ENCODE measurements at regions of chr3 and their contacts with region 1.

Region 1: DNA sequence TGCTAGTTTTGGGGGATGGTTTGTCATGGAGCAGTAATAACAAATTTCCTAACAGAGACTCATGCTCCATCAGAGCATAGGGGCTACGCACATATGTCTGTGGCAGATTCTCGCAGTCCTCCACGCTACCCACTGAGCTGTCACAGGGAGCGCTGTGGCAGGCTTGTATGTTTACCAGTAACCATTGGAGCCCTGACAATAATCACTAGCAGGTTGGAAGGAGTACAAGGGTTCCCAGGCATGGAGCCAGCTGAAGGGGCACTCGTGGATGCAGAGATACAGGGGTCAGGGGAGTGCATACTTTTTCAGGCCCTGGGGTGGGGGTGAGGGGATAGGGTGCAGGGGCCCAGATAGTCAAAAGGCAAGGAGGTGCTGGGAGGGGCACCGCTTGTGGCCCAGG is 7.9 kb upstream of the GP9 start:
- DNase-seq: peak in 2 of 3 donors; percentile 7 to 35
- H3K4me3 ChIP-seq: no peak overlapping the region
- H3K27ac ChIP-seq: no peak overlapping the region
- H3K4me1 ChIP-seq: peaks cover 0 to 16% (median 4%) of the 10 kb centered on the region in 4 experiments
- H3K27me3 ChIP-seq: no peaks in the 10 kb centered on the region

Region 2: DNA sequence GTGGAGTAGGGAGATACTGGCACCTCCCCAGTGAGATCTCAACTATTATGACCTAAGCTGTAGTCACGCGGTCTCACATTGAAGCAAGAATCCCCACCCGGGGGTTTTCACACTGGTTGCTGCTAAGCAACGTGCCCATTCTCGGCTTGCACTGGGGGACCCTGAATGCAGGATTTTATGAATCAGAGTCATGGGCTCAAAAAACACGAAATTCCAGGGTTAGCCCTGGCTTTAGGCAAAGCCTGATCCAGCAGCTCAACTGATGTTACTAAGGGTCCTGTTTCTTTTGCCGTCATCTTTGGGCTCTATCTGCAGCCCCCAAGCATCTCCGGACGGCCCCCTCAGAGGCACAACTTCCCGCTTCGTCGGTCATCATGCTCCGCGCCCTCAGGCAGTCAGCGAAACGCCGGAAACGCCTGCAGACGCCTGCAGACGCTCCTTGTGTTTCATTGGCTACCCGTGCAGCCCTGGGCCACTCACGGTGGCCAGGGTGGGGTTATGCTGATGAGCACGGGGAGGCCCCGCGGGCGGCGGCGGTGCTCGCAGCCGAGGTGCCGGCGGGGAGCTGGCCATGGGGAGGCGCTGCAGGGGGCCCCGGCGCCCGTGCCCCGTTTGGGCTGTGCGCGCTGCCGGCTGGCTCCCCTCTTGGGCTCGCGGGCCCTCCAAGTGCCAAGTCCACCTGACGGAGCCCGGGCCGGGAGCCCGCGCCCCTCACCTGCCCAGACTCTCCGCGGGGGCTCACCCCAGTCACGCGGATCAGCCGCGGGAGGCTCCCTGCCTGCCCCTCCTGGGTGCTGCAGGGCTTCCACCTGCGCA is 25.7 kb before region 1 on chr3:
- CTCF ChIA-PET with region 1: interaction called, 20 read pairs
- POLR2A ChIA-PET with region 1: interaction called, 5 read pairs
- DNase-seq: peak; percentile 93 to 98 (median 97)
- H3K4me3 ChIP-seq: peak overlapping the region; percentile 35 to 76 (median 55)
- H3K27ac ChIP-seq: peak overlapping the region in 1 of 2 experiments; percentile 49
- H3K4me1 ChIP-seq: peaks cover 0 to 30% (median 22%) of the 10 kb centered on the region in 4 experiments
- H3K27me3 ChIP-seq: no peaks in the 10 kb centered on the region

Region 3: GRCh38 chr3:129039271-129040038 is 13.2 kb before region 1 on chr3:
- CTCF ChIA-PET with region 1: interaction called, 56 read pairs
- POLR2A ChIA-PET with region 1: no interaction called
- DNase-seq: peak in 2 of 3 donors; percentile 63 to 64
- H3K4me3 ChIP-seq: no peak overlapping the region
- H3K27ac ChIP-seq: no peak overlapping the region
- H3K4me1 ChIP-seq: peaks cover 0 to 37% (median 27%) of the 10 kb centered on the region in 4 experiments
- H3K27me3 ChIP-seq: no peaks in the 10 kb centered on the region

Region 4: GRCh38 chr3:129068291-129068886 is 15.7 kb after region 1 on chr3:
- CTCF ChIA-PET with region 1: interaction called, 48 read pairs
- POLR2A ChIA-PET with region 1: no interaction called
- DNase-seq: peak in 2 of 3 donors; percentile 46 to 66
- H3K4me3 ChIP-seq: peak overlapping the region in 5 of 7 experiments; percentile 8 to 71 (median 58)
- H3K27ac ChIP-seq: no peak overlapping the region
- H3K4me1 ChIP-seq: peaks cover 8 to 31% (median 20%) of the 10 kb centered on the region in 4 experiments
- H3K27me3 ChIP-seq: no peaks in the 10 kb centered on the region

Region 5: DNA sequence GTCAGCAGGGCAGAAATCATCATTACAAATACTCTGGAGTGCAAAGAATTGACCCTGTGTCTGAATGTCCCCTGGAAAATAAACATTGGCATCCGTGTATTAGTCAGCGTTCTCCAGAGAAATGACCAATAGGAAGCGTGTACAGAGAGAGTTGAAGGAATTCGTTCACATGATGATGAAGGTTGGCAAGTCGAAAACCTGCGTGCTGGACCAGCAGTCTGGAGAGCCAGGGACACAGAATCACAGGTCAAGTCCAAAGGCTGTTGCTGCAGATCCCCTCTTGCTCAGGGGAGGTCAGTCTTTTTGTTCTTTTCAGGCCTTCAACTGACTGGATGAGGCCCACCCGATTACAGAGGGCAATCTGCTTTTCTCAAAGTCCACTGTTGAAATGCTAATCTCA is 24.5 kb after region 1 on chr3:
- CTCF ChIA-PET with region 1: interaction called, 20 read pairs
- POLR2A ChIA-PET with region 1: no interaction called
- DNase-seq: no peak
- H3K4me3 ChIP-seq: no peak overlapping the region
- H3K27ac ChIP-seq: no peak overlapping the region
- H3K4me1 ChIP-seq: peaks cover 0 to 13% (median 4%) of the 10 kb centered on the region in 4 experiments
- H3K27me3 ChIP-seq: no peaks in the 10 kb centered on the region

Region 6: GRCh38 chr3:129087138-129087702 is 34.5 kb after region 1 on chr3:
- CTCF ChIA-PET with region 1: interaction called, 15 read pairs
- POLR2A ChIA-PET with region 1: no interaction called
- DNase-seq: no peak
- H3K4me3 ChIP-seq: no peak overlapping the region
- H3K27ac ChIP-seq: no peak overlapping the region
- H3K4me1 ChIP-seq: peaks cover 0 to 5% (median 1%) of the 10 kb centered on the region in 4 experiments
- H3K27me3 ChIP-seq: no peaks in the 10 kb centered on the region

Region 7: GRCh38 chr3:129101370-129102138 is 48.9 kb after region 1 on chr3:
- CTCF ChIA-PET with region 1: interaction called, 10 read pairs
- POLR2A ChIA-PET with region 1: no interaction called
- DNase-seq: no peak
- H3K4me3 ChIP-seq: no peak overlapping the region
- H3K27ac ChIP-seq: no peak overlapping the region
- H3K4me1 ChIP-seq: no peaks in the 10 kb centered on the region
- H3K27me3 ChIP-seq: no peaks in the 10 kb centered on the region

Measured in common myeloid progenitor, CD34-positive (primary cell).